ENCODE measurements at regions of chr4 and their contacts with region 1.

Region 1: GRCh38 chr4:173917255-173917960 is 366.1 kb downstream of the FBXO8 start:
- DNase-seq: peak; percentile 79
- ATAC-seq: peak; percentile 82
- H3K4me3 ChIP-seq: no peak overlapping the region
- H3K27ac ChIP-seq: peak overlapping the region; percentile 44; the same call in 1 of the 2 replicates
- H3K4me1 ChIP-seq: peaks cover 9% of the 10 kb centered on the region
- H3K27me3 ChIP-seq: no peaks in the 10 kb centered on the region
- CTCF ChIP-seq: no peak
- POLR2A ChIP-seq: no peak
- RAD21 ChIP-seq: no peak

Region 2: DNA sequence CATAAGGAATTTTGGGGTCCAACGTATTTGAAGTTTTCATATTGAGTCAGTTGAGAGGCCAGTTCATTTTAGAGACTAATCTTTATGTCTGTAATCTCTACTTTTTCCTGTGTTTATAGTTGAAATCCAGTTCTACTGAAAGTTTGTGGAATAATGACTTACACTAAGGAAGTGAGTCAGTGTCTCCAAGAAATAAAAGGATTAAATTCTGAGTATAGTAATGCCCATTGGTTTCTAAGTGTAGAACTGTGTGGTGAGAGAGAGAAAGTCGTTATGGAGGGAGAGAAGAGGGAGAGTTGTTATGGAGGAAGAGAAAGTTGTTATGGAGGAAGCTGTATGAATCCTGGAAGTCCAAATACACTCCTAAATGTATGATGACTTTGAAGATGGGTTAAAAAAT is 122.7 kb before region 1 on chr4:
- CTCF ChIA-PET with region 1: no interaction called
- POLR2A ChIA-PET with region 1: no interaction called
- dilution Hi-C with region 1: no loop called
- in situ Hi-C with region 1: no loop called
- intact Hi-C with region 1: loop called (anchors 5 kb)
- DNase-seq: peak; percentile 85
- ATAC-seq: peak; percentile 91
- H3K4me3 ChIP-seq: no peak overlapping the region
- H3K27ac ChIP-seq: no peak overlapping the region
- H3K4me1 ChIP-seq: 0 out of 2 replicates have a peak, but pooled peaks cover 2% of the 10 kb centered on the region
- H3K27me3 ChIP-seq: no peaks in the 10 kb centered on the region
- CTCF ChIP-seq: no peak
- POLR2A ChIP-seq: no peak; the same call in 1 of the 2 replicates
- RAD21 ChIP-seq: no peak